ENCODE measurements at regions of chr14 and their contacts with region 1.

Region 1: DNA sequence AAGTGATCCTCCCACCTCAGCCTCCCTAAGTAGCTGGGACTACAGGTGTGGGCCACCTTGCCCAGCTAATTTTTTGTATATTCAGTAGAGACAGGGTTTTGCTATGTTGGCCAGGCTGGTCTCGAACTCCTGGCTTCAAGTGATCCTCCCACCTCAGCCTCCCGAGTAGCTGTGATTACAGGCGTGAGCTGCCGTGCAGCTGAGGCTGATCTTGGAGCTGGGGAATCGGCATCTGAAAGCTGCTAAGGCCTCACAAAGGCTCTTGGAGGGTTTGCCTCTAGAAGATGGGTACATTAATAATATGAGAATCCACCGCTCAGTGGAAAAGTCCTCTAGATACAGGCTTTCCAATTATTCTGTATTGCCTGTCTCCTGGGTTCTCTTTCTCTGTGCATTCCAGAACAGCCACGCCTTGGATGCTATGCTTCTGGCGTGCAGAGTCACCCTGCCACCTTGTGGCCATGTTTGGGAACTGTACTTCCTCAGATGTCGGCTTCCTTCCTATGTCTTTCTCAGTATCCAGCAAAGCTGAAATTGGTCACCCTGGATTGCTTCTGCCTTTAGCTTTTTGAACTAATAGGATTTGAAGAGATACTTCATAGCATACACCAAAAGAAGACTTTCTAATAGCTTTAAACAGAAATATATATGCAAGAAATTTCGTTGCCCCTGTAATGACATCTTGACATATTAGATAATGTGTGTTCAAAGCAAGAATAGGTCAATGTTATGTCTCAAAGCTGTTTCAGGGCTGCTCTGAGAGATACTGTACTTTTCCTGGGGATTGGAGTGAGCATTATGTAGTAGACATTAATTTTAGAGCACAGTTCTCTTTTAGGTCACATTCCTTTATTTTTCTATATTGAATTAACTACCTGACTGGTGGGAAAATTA is 75.4 kb downstream of the SNAPC1 start:
- DNase-seq: peak; percentile 85
- H3K4me3 Mint-ChIP-seq: no peak overlapping the region
- H3K27ac Mint-ChIP-seq: no peak overlapping the region
- H3K4me1 Mint-ChIP-seq: peaks cover 4% of the 10 kb centered on the region
- H3K27me3 Mint-ChIP-seq: peaks cover 2% of the 10 kb centered on the region

Region 2: GRCh38 chr14:60561845-60562746 is 1275.5 kb before region 1 on chr14:
- CTCF ChIA-PET with region 1: no interaction called
- POLR2A ChIA-PET with region 1: no interaction called
- intact Hi-C with region 1: no loop called
- DNase-seq: peak; percentile 53
- H3K4me3 Mint-ChIP-seq: no peak overlapping the region
- H3K27ac Mint-ChIP-seq: no peak overlapping the region
- H3K4me1 Mint-ChIP-seq: no peaks in the 10 kb centered on the region
- H3K27me3 Mint-ChIP-seq: peaks cover 3% of the 10 kb centered on the region

Region 3: GRCh38 chr14:61280526-61281185 is 556.9 kb before region 1 on chr14:
- CTCF ChIA-PET with region 1: interaction called, 11 read pairs
- POLR2A ChIA-PET with region 1: no interaction called
- intact Hi-C with region 1: loop called (anchors 5 kb)
- DNase-seq: peak; percentile 82
- H3K4me3 Mint-ChIP-seq: peak overlapping the region; percentile 87
- H3K27ac Mint-ChIP-seq: peak overlapping the region; percentile 70
- H3K4me1 Mint-ChIP-seq: peaks cover 34% of the 10 kb centered on the region
- H3K27me3 Mint-ChIP-seq: peaks cover 3% of the 10 kb centered on the region

Region 4: DNA sequence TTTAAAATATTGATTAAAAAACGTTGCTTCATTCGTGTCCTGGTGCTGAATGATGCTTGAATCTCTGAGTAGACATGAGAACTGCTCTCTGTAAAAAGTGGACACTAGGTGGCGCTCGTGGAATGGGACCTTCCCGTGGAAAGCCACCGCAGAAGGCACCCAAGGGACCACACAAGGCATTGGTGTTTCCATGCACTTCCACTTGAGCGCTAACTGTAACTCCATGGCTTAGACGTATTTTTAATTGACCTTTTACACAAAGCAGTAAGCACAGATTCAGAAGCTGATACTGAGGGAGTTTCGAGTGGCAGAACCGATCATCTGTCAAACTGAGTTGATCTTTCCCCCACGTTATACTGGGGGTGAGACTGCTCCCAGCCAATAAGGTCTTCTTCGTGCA is 380.9 kb before region 1 on chr14:
- CTCF ChIA-PET with region 1: interaction called, 70 read pairs
- POLR2A ChIA-PET with region 1: interaction called, 4 read pairs
- intact Hi-C with region 1: loop called (anchors 1 kb)
- DNase-seq: peak; percentile 87
- H3K4me3 Mint-ChIP-seq: no peak overlapping the region
- H3K27ac Mint-ChIP-seq: peak overlapping the region; percentile 60
- H3K4me1 Mint-ChIP-seq: peaks cover 81% of the 10 kb centered on the region
- H3K27me3 Mint-ChIP-seq: no peaks in the 10 kb centered on the region

Region 5: GRCh38 chr14:61761959-61762786 is 75.4 kb before region 1 on chr14 and contains the start of gene SNAPC1:
- CTCF ChIA-PET with region 1: interaction called, 40 read pairs
- POLR2A ChIA-PET with region 1: no interaction called
- intact Hi-C with region 1: loop called (anchors 1 kb)
- DNase-seq: peak; percentile 98
- H3K4me3 Mint-ChIP-seq: peak within 1 kb of the TSS; percentile 95
- H3K27ac Mint-ChIP-seq: peak within 1 kb of the TSS; percentile 95
- H3K4me1 Mint-ChIP-seq: peaks cover 42% of the 10 kb centered on the region
- H3K27me3 Mint-ChIP-seq: no peaks in the 10 kb centered on the region
- total RNA-seq, gene SNAPC1: 9.1 TPM

Region 6: GRCh38 chr14:61860294-61860918 is 22.8 kb after region 1 on chr14:
- CTCF ChIA-PET with region 1: interaction called, 14 read pairs
- POLR2A ChIA-PET with region 1: no interaction called
- intact Hi-C with region 1: no loop called
- DNase-seq: peak; percentile 85
- H3K4me3 Mint-ChIP-seq: no peak overlapping the region
- H3K27ac Mint-ChIP-seq: no peak overlapping the region
- H3K4me1 Mint-ChIP-seq: no peaks in the 10 kb centered on the region
- H3K27me3 Mint-ChIP-seq: peaks cover 15% of the 10 kb centered on the region

Region 7: DNA sequence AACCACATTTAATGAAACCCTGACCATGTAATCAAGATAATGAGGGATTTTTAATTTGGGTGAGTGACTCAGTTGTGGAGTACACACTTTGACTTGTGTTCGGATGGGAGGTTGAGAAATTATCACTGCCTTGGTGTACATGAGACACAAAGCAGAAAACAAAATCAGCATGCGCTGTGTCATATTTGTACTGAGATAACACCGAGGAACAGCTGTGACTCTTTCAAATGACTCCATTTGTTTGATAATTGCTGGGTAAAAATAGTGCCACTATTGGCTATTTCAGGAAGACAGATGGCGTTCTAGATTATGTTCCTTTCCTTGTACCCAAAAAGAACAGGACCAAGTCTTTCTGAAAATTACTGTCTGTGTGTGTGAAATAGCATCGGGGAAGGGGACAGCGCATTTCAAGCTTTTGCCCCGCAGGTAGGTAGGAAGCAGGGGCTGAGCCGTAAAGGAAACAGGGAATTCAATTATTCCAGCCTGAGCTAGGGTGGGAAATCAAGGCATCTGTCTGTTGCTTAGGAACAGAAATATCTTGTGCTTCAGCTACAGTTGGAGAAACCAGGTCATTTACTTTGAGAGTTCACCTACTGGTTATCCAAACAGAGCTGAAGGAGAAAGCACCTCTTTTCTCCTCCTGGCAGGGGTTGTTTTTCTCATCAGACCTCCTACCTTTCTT is 38.9 kb after region 1 on chr14:
- CTCF ChIA-PET with region 1: no interaction called
- POLR2A ChIA-PET with region 1: no interaction called
- intact Hi-C with region 1: no loop called
- DNase-seq: no peak
- H3K4me3 Mint-ChIP-seq: no peak overlapping the region
- H3K27ac Mint-ChIP-seq: no peak overlapping the region
- H3K4me1 Mint-ChIP-seq: no peaks in the 10 kb centered on the region
- H3K27me3 Mint-ChIP-seq: peaks cover 34% of the 10 kb centered on the region

Region 8: GRCh38 chr14:61992139-61992538 is 154.6 kb after region 1 on chr14:
- CTCF ChIA-PET with region 1: no interaction called
- POLR2A ChIA-PET with region 1: no interaction called
- intact Hi-C with region 1: no loop called
- DNase-seq: no peak
- H3K4me3 Mint-ChIP-seq: no peak overlapping the region
- H3K27ac Mint-ChIP-seq: no peak overlapping the region
- H3K4me1 Mint-ChIP-seq: no peaks in the 10 kb centered on the region
- H3K27me3 Mint-ChIP-seq: peaks cover 3% of the 10 kb centered on the region

Region 9: GRCh38 chr14:62156052-62156451 is 318.5 kb after region 1 on chr14:
- CTCF ChIA-PET with region 1: no interaction called
- POLR2A ChIA-PET with region 1: no interaction called
- intact Hi-C with region 1: no loop called
- DNase-seq: no peak
- H3K4me3 Mint-ChIP-seq: no peak overlapping the region
- H3K27ac Mint-ChIP-seq: no peak overlapping the region
- H3K4me1 Mint-ChIP-seq: no peaks in the 10 kb centered on the region
- H3K27me3 Mint-ChIP-seq: peaks cover 8% of the 10 kb centered on the region